Calu3 (cell line): ENCODE measurements at regions of chrX and their contacts with region 1.

Region 1: GRCh38 chrX:49043220-49043986 is at the start of gene TFE3:
- DNase-seq: peak; percentile 97
- H3K4me3 Mint-ChIP-seq: peak within 1 kb of the TSS; percentile 89
- H3K27ac Mint-ChIP-seq: peak within 1 kb of the TSS; percentile 93
- H3K4me1 Mint-ChIP-seq: peaks cover 36% of the 10 kb centered on the region
- H3K27me3 Mint-ChIP-seq: no peaks in the 10 kb centered on the region
- CTCF ChIP-seq: peak; percentile 53
- total RNA-seq, gene TFE3: 32.2 and 35.1 TPM in 2 replicates

Region 2: GRCh38 chrX:48801280-48802088 is 241.9 kb before region 1 on chrX and contains the start of gene HDAC6:
- CTCF ChIA-PET with region 1: interaction called, 3 read pairs
- intact Hi-C with region 1: loop called (anchors 10 kb)
- DNase-seq: peak; percentile 97
- H3K4me3 Mint-ChIP-seq: peak within 1 kb of the TSS; percentile 95
- H3K27ac Mint-ChIP-seq: peak within 1 kb of the TSS; percentile 98
- H3K4me1 Mint-ChIP-seq: peaks cover 18% of the 10 kb centered on the region
- H3K27me3 Mint-ChIP-seq: no peaks in the 10 kb centered on the region
- CTCF ChIP-seq: no peak
- total RNA-seq, gene HDAC6: 68.1 and 78.7 TPM in 2 replicates

Region 3: GRCh38 chrX:48917139-48918001 is 126.0 kb before region 1 on chrX:
- CTCF ChIA-PET with region 1: no interaction called
- intact Hi-C with region 1: loop called (anchors 2 kb)
- DNase-seq: peak; percentile 87
- H3K4me3 Mint-ChIP-seq: peak overlapping the region; percentile 97
- H3K27ac Mint-ChIP-seq: peak overlapping the region; percentile 90
- H3K4me1 Mint-ChIP-seq: peaks cover 22% of the 10 kb centered on the region
- H3K27me3 Mint-ChIP-seq: no peaks in the 10 kb centered on the region
- CTCF ChIP-seq: peak; percentile 92

Region 4: GRCh38 chrX:48972220-48973167 is 70.9 kb before region 1 on chrX:
- CTCF ChIA-PET with region 1: interaction called, 3 read pairs
- intact Hi-C with region 1: loop called (anchors 5 kb)
- DNase-seq: peak; percentile 51
- H3K4me3 Mint-ChIP-seq: peak overlapping the region; percentile 73
- H3K27ac Mint-ChIP-seq: peak overlapping the region; percentile 0
- H3K4me1 Mint-ChIP-seq: peaks cover 16% of the 10 kb centered on the region
- H3K27me3 Mint-ChIP-seq: no peaks in the 10 kb centered on the region
- CTCF ChIP-seq: peak; percentile 28

Region 5: GRCh38 chrX:49002091-49002935 is 41.1 kb before region 1 on chrX and contains the start of gene GRIPAP1:
- CTCF ChIA-PET with region 1: interaction called, 16 read pairs
- intact Hi-C with region 1: loop called (anchors 5 kb)
- DNase-seq: peak; percentile 69
- H3K4me3 Mint-ChIP-seq: peak within 1 kb of the TSS; percentile 99
- H3K27ac Mint-ChIP-seq: peak within 1 kb of the TSS; percentile 97
- H3K4me1 Mint-ChIP-seq: peaks cover 26% of the 10 kb centered on the region
- H3K27me3 Mint-ChIP-seq: no peaks in the 10 kb centered on the region
- CTCF ChIP-seq: no peak
- total RNA-seq, gene GRIPAP1: 92.8 and 97.8 TPM in 2 replicates

Region 6: DNA sequence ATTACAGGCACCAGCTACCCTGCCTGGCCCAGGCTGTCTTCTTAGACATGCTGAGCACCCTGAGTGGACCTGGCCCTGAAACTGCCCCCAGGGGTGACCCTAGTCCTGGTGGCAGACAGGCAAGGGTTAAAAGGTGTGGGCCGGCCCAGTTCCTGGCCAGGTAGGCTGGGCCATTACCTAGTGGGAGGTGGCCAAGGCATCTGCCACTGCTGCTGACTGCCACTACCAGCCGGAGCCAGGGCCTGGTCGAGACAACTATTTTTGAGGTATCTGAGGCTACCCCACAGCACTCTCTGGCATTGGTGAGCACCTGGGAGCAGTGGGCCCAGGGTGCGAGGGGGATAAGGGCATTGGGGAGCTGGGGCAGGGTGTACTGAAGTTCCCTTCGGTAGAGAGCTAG is 15.4 kb after region 1 on chrX and contains the start of gene CCDC120:
- CTCF ChIA-PET with region 1: no interaction called
- intact Hi-C with region 1: loop called (anchors 1 kb)
- DNase-seq: peak; percentile 67
- H3K4me3 Mint-ChIP-seq: peak within 1 kb of the TSS; percentile 88
- H3K27ac Mint-ChIP-seq: peak within 1 kb of the TSS; percentile 74
- H3K4me1 Mint-ChIP-seq: peaks cover 25% of the 10 kb centered on the region
- H3K27me3 Mint-ChIP-seq: no peaks in the 10 kb centered on the region
- CTCF ChIP-seq: no peak
- total RNA-seq, gene CCDC120: 30.8 and 39.0 TPM in 2 replicates